Activated CD8-positive, alpha-beta T cell treated with anti-CD3 and anti-CD28 coated beads for 36 hours (primary cell): ENCODE measurements at regions of chr20 and their contacts with region 1.

Region 1: DNA sequence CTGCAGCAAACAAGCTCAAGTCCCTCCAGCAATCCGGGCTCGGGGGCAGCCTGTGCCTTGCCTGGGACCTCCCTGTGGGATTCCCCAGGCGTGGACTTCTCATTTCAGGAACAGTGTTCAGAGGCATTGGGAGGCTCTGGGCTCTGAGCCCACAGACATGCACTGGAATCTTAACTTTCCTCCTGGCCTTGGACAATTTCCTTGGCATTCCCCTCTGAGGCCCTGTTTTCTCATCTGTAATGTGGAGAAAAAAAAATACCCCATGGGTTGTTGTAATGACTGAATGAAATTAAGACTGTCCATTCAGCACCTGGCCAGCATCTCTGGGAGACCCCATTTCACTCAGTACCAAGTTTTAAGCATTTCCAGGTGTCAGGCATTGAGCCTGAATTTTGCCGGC is 17.6 kb downstream of the BPIFB4 start:
- DNase-seq: no peak
- ATAC-seq: no peak
- H3K4me3 Mint-ChIP-seq: no peak overlapping the region
- H3K27ac Mint-ChIP-seq: no peak overlapping the region
- H3K4me1 Mint-ChIP-seq: peaks cover 2% of the 10 kb centered on the region
- H3K27me3 Mint-ChIP-seq: no peaks in the 10 kb centered on the region
- CTCF ChIP-seq: no peak

Region 2: GRCh38 chr20:32894026-32894483 is 202.9 kb before region 1 on chr20:
- CTCF ChIA-PET with region 1: interaction called, 15 read pairs
- POLR2A ChIA-PET with region 1: no interaction called
- intact Hi-C with region 1: no loop called
- DNase-seq: peak; percentile 22
- ATAC-seq: peak; percentile 43
- H3K4me3 Mint-ChIP-seq: no peak overlapping the region
- H3K27ac Mint-ChIP-seq: no peak overlapping the region
- H3K4me1 Mint-ChIP-seq: peaks cover 5% of the 10 kb centered on the region
- H3K27me3 Mint-ChIP-seq: no peaks in the 10 kb centered on the region
- CTCF ChIP-seq: peak; percentile 13

Region 3: DNA sequence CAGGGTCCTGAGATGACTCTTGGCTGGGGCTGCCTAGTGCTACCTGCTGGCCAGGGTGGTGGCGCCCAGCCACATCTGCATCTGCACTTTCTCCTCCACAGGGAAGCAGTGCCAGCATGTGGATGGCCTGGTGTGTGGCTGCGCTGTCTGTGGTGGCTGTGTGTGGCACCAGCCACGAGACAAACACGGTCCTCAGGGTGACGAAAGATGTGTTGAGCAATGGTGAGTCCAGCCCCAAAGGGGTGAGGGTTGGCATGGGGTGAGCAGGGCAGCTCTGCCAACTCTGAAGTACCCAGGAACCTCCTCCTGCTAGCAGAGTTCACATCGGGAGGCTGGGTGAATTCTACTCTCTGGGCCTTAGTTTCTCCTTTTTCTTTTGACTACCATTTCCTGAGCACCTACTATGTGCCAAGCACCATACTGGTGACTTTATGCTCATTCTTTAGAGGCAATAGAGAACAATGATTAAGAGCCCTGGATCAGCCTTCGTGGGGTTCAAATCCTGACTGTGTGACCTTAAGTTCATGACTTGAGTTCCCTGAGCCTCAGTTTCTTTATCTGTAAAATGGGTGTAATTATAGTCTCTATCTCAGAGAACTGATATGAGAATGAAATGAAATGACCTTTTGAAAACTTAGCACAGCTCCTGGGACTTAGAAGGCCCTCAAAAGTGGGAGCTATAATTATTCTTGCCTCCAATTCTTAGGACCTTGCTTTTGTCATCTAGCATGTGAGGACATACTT is 15.4 kb before region 1 on chr20:
- CTCF ChIA-PET with region 1: no interaction called
- POLR2A ChIA-PET with region 1: no interaction called
- intact Hi-C with region 1: no loop called
- DNase-seq: no peak
- ATAC-seq: no peak
- H3K4me3 Mint-ChIP-seq: no peak overlapping the region
- H3K27ac Mint-ChIP-seq: no peak overlapping the region
- H3K4me1 Mint-ChIP-seq: no peaks in the 10 kb centered on the region
- H3K27me3 Mint-ChIP-seq: no peaks in the 10 kb centered on the region
- CTCF ChIP-seq: no peak

Region 4: GRCh38 chr20:33299111-33299603 is 202.2 kb after region 1 on chr20:
- CTCF ChIA-PET with region 1: interaction called, 5 read pairs
- POLR2A ChIA-PET with region 1: no interaction called
- intact Hi-C with region 1: loop called (anchors 10 kb)
- DNase-seq: peak; percentile 81
- ATAC-seq: peak; percentile 92
- H3K4me3 Mint-ChIP-seq: no peak overlapping the region
- H3K27ac Mint-ChIP-seq: no peak overlapping the region
- H3K4me1 Mint-ChIP-seq: no peaks in the 10 kb centered on the region
- H3K27me3 Mint-ChIP-seq: peaks cover 3% of the 10 kb centered on the region
- CTCF ChIP-seq: peak; percentile 90